ENCODE measurements at regions of chr6 and their contacts with region 1.

Region 1: GRCh38 chr6:42928986-42929820 is at the start of gene CNPY3:
- DNase-seq: peak; percentile 90 to 97 (median 95)
- H3K4me3 ChIP-seq: peak within 1 kb of the TSS; percentile 78
- H3K4me3 Mint-ChIP-seq: peak within 1 kb of the TSS; percentile 97 to 100 (median 99)
- H3K27ac ChIP-seq: peak within 1 kb of the TSS; percentile 91
- H3K27ac Mint-ChIP-seq: peak within 1 kb of the TSS; percentile 97 to 100 (median 99)
- H3K4me1 ChIP-seq: peaks cover 45% of the 10 kb centered on the region
- H3K4me1 Mint-ChIP-seq: peaks cover 46 to 51% (median 50%) of the 10 kb centered on the region in 3 donors
- H3K27me3 ChIP-seq: no peaks in the 10 kb centered on the region
- H3K27me3 Mint-ChIP-seq: peaks cover 0 to 2% of the 10 kb centered on the region in 2 donors
- total RNA-seq, gene CNPY3: 53.1 to 55.8 TPM

Region 2: GRCh38 chr6:42782622-42783176 is 146.5 kb before region 1 on chr6:
- CTCF ChIA-PET with region 1: no interaction called
- POLR2A ChIA-PET with region 1: interaction called, 18 read pairs
- DNase-seq: peak; percentile 65 to 89 (median 79)
- H3K4me3 ChIP-seq: peak overlapping the region; percentile 95
- H3K4me3 Mint-ChIP-seq: peak overlapping the region; percentile 93 to 100 (median 98)
- H3K27ac ChIP-seq: peak overlapping the region; percentile 99
- H3K27ac Mint-ChIP-seq: peak overlapping the region in 7 of 8 donors; percentile 98 to 100 (median 100)
- H3K4me1 ChIP-seq: peaks cover 64% of the 10 kb centered on the region
- H3K4me1 Mint-ChIP-seq: peaks cover 34 to 35% (median 34%) of the 10 kb centered on the region in 3 donors
- H3K27me3 ChIP-seq: no peaks in the 10 kb centered on the region
- H3K27me3 Mint-ChIP-seq: peaks cover 0 to 13% of the 10 kb centered on the region in 2 donors

Region 3: GRCh38 chr6:42952389-42952788 is 23.2 kb after region 1 on chr6:
- CTCF ChIA-PET with region 1: no interaction called
- POLR2A ChIA-PET with region 1: no interaction called
- DNase-seq: no peak
- H3K4me3 ChIP-seq: no peak overlapping the region
- H3K4me3 Mint-ChIP-seq: no peak overlapping the region
- H3K27ac ChIP-seq: no peak overlapping the region
- H3K27ac Mint-ChIP-seq: no peak overlapping the region
- H3K4me1 ChIP-seq: no peaks in the 10 kb centered on the region
- H3K4me1 Mint-ChIP-seq: no peaks in the 10 kb centered on the region
- H3K27me3 ChIP-seq: no peaks in the 10 kb centered on the region
- H3K27me3 Mint-ChIP-seq: no peaks in the 10 kb centered on the region

Region 4: DNA sequence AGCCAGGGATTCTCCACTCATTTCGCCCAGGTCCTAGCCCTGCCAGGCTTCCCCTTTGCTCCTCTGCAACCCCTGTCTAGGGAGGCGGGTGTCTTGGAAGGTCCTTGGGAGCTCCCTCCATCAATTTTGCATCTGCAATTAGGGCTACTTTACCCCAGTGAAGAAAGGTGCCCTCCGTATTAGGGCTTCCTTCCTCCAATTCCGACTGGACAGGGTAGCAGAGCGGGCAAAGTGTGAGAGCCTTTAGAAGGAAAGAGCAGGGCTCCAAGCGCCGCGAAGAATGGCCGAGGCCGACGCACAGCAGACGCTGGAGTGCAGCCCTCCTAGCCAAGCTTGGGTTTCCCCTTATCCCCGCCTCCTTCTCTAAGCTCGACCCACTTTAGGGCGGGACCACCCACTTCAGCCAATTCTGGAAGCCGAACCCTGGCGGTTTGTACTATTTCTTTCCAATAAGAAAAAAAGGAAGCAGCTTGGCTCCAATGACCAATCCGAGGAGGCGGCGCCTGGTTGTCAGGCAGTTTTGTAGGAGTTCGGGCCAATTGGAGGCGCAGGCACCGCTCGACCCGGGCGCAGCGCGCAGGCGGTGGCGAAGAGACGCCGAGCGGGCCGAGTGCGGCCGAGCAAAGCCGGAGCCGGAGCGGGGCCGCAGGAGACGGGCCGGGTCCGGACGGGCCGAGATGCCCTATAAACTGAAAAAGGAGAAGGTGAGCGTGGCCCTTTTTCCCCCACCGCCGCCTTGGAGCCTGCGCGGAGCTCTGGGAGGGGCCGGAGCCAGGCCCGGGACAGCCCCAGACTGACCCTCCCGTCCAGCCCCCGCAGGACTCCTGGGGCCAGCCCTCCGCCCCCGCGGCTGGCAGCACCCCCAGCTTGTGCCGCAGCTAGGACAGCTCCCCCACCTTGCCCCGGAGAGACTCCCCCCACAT is 55.1 kb after region 1 on chr6 and contains the start of gene PPP2R5D:
- CTCF ChIA-PET with region 1: interaction called, 17 read pairs
- POLR2A ChIA-PET with region 1: interaction called, 50 read pairs
- DNase-seq: peak; percentile 93 to 98 (median 97)
- H3K4me3 ChIP-seq: peak within 1 kb of the TSS; percentile 88
- H3K4me3 Mint-ChIP-seq: peak within 1 kb of the TSS; percentile 82 to 96 (median 93)
- H3K27ac ChIP-seq: peak within 1 kb of the TSS; percentile 87
- H3K27ac Mint-ChIP-seq: peak within 1 kb of the TSS; percentile 90 to 98 (median 96)
- H3K4me1 ChIP-seq: peaks cover 53% of the 10 kb centered on the region
- H3K4me1 Mint-ChIP-seq: peaks cover 59 to 73% (median 60%) of the 10 kb centered on the region in 3 donors
- H3K27me3 ChIP-seq: no peaks in the 10 kb centered on the region
- H3K27me3 Mint-ChIP-seq: peaks cover 0 to 2% of the 10 kb centered on the region in 2 donors
- total RNA-seq, gene PPP2R5D: 52.2 to 52.4 TPM

Region 5: DNA sequence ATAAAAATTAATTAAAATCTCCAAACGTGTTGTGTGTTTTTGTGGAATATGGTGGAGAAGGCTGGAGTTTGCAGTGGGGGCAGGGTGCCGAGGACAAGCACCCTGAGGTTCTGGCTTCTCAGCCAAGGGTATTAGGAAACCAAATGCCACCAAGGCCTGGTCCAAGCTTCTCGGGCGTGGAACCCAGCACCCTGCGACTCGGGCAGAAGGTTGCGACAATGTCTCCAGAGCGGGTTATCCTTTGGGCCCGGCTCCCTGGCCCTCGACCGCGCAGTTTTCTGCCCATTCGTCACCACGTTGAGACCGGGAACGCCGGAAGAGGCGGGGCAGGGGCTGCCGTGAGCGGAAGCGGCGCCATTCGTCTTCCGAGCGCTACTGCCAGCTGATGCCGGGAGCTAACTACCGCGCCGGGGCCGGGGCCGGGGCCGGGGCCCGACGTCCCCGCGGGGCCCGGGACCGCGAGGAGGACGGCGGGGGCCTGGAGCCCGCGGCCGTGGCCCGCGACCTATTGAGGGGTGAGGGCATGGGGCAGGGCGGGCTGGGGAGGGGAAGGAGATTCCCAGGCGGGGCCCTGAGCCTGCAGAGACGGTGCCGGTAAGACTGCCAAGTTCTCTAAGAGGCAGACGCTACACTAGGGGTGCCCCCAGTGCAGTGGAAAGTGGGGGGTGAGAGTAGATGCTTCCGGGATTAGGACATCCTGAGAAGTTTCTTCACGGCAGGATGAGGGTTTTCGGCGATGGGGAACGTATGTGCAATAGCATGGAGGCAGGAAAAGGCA is 92.3 kb after region 1 on chr6 and contains the start of gene RRP36:
- CTCF ChIA-PET with region 1: interaction called, 3 read pairs
- POLR2A ChIA-PET with region 1: interaction called, 13 read pairs
- DNase-seq: peak; percentile 52 to 73 (median 56)
- H3K4me3 ChIP-seq: peak within 1 kb of the TSS; percentile 92
- H3K4me3 Mint-ChIP-seq: peak within 1 kb of the TSS; percentile 95 to 99 (median 97)
- H3K27ac ChIP-seq: peak within 1 kb of the TSS; percentile 71
- H3K27ac Mint-ChIP-seq: peak within 1 kb of the TSS; percentile 84 to 98 (median 95)
- H3K4me1 ChIP-seq: peaks cover 39% of the 10 kb centered on the region
- H3K4me1 Mint-ChIP-seq: peaks cover 27 to 47% (median 35%) of the 10 kb centered on the region in 3 donors
- H3K27me3 ChIP-seq: no peaks in the 10 kb centered on the region
- H3K27me3 Mint-ChIP-seq: no peaks in the 10 kb centered on the region
- total RNA-seq, gene RRP36: 114 to 120 TPM

Region 6: GRCh38 chr6:43143235-43144124 is 214.3 kb after region 1 on chr6:
- CTCF ChIA-PET with region 1: interaction called, 21 read pairs
- POLR2A ChIA-PET with region 1: no interaction called
- DNase-seq: peak; percentile 64 to 86 (median 73)
- H3K4me3 ChIP-seq: peak overlapping the region; percentile 29
- H3K4me3 Mint-ChIP-seq: peak overlapping the region; percentile 43 to 81 (median 65)
- H3K27ac ChIP-seq: no peak overlapping the region
- H3K27ac Mint-ChIP-seq: peak overlapping the region in 7 of 8 donors; percentile 13 to 91 (median 75)
- H3K4me1 ChIP-seq: peaks cover 21% of the 10 kb centered on the region
- H3K4me1 Mint-ChIP-seq: peaks cover 21 to 27% (median 26%) of the 10 kb centered on the region in 3 donors
- H3K27me3 ChIP-seq: no peaks in the 10 kb centered on the region
- H3K27me3 Mint-ChIP-seq: peaks cover 2 to 6% of the 10 kb centered on the region in 2 donors

Measured in CD8-positive, alpha-beta memory T cell (primary cell).